ENCODE measurements at regions of chr4 and their contacts with region 1.

Region 1: GRCh38 chr4:63379750-63380522 is 1029.3 kb downstream of the TECRL start:
- DNase-seq: no peak
- ATAC-seq: no peak
- H3K4me3 Mint-ChIP-seq: no peak overlapping the region
- H3K27ac Mint-ChIP-seq: no peak overlapping the region
- H3K4me1 Mint-ChIP-seq: no peaks in the 10 kb centered on the region
- H3K27me3 Mint-ChIP-seq: no peaks in the 10 kb centered on the region

Region 2: GRCh38 chr4:63315651-63316050 is 64.3 kb before region 1 on chr4:
- CTCF ChIA-PET with region 1: no interaction called
- POLR2A ChIA-PET with region 1: no interaction called
- intact Hi-C with region 1: loop called in 1 of 2 experiments (anchors 10 kb)
- DNase-seq: no peak
- ATAC-seq: no peak
- H3K4me3 Mint-ChIP-seq: no peak overlapping the region
- H3K27ac Mint-ChIP-seq: no peak overlapping the region
- H3K4me1 Mint-ChIP-seq: no peaks in the 10 kb centered on the region
- H3K27me3 Mint-ChIP-seq: no peaks in the 10 kb centered on the region